K562 (cell line): ENCODE measurements at regions of chr3 and their contacts with region 1.

Region 1: GRCh38 chr3:46368569-46368968 is 2.2 kb upstream of the CCR5 start:
- DNase-seq: peak in 1 of 4 experiments; percentile 33
- ATAC-seq: peak; percentile 86
- H3K4me3 ChIP-seq: no peak overlapping the region
- H3K27ac ChIP-seq: no peak overlapping the region
- H3K4me1 ChIP-seq: no peaks in the 10 kb centered on the region
- H3K27me3 ChIP-seq: peaks cover 30 to 48% of the 10 kb centered on the region in 2 experiments
- CTCF ChIP-seq: peak; percentile 36 to 54 (median 44); a peak in 5 of 6 replicates
- EP300 ChIP-seq: no peak
- POLR2A ChIP-seq: no peak
- RAD21 ChIP-seq: peak; percentile 69 to 76

Region 2: GRCh38 chr3:45972534-45973402 is 395.8 kb before region 1 on chr3:
- CTCF ChIA-PET with region 1: no interaction called
- POLR2A ChIA-PET with region 1: no interaction called
- in situ Hi-C with region 1: no loop called
- intact Hi-C with region 1: no loop called
- DNase-seq: no peak
- ATAC-seq: no peak
- H3K4me3 ChIP-seq: no peak overlapping the region
- H3K27ac ChIP-seq: no peak overlapping the region
- H3K4me1 ChIP-seq: no peaks in the 10 kb centered on the region
- H3K27me3 ChIP-seq: no peaks in the 10 kb centered on the region
- CTCF ChIP-seq: no peak
- EP300 ChIP-seq: no peak
- POLR2A ChIP-seq: no peak
- RAD21 ChIP-seq: no peak

Region 3: DNA sequence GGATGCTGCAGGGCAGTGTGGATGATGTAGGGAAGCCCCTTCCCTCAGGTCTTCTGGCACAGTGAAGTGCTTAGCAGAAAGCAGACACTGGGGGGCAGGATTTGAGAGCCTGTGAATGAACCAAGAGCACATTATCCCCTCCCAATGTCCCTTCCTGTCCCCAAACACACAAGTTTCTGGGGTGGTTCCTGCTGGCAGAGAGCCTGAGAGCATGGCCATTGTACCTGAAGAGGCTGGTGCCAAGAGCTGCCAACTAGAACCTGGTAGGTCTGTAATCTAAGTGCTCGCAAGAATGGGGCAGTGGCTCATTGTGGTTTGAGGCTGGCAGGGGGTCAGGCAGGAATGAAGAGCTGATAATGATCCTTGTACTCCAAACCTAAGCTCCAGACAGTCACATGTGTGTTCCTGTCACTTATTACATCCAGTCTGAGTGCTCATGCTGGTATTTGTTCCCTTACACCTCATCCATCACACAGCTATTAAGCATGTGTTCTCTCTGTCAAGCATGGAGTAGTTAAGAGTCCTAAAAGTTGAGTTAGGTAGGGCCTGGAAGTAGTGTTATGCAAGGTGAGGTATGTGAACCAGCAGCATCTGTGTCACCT is 153.7 kb before region 1 on chr3:
- CTCF ChIA-PET with region 1: no interaction called
- POLR2A ChIA-PET with region 1: interaction called, 3 read pairs
- in situ Hi-C with region 1: no loop called
- intact Hi-C with region 1: loop called (anchors 5 kb)
- DNase-seq: peak in 2 of 4 experiments; percentile 24 to 32
- ATAC-seq: peak; percentile 79
- H3K4me3 ChIP-seq: no peak overlapping the region
- H3K27ac ChIP-seq: no peak overlapping the region
- H3K4me1 ChIP-seq: no peaks in the 10 kb centered on the region
- H3K27me3 ChIP-seq: no peaks in the 10 kb centered on the region
- CTCF ChIP-seq: peak; percentile 49 to 60 (median 58)
- EP300 ChIP-seq: no peak
- POLR2A ChIP-seq: no peak
- RAD21 ChIP-seq: peak; percentile 59 to 68

Region 4: DNA sequence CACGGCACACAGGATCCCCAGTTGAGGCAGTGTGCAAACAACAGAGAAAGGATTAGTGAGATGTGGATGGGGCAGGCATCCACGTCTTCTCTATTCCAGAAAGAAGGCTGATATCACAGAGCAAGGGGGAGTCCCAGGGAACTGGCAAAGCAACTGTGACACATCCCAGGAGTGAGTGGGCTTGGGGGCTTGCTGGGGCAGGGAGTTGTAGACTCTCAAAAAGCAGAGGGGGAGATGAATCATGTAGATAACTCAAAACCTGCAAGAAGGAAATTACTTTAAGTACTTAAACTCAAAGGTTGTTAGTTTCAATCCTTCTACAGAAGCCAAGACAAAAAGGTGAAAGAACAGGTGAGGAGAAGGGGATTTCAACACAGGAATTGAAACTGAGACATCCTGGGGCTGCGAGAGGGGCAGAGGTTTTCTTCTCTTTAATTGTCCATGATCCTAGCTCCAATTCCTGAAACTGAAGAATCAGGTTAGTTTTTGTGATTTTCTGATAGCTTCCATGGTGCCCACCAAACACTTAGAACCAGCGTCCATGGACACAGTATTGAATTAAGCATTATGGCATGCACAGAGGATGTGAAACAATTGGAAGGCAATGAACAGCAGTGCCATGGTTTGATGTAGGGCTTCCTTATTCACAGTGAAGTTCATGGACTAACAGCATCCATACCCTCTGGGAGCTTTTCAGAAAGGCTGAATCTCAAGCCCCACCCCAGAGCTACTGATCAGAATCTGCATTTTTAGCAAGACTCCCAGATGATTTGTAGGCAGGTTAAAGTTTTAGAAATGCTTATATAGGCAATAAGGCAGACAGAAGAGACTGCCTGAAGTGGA is 74.4 kb before region 1 on chr3:
- CTCF ChIA-PET with region 1: no interaction called
- POLR2A ChIA-PET with region 1: no interaction called
- in situ Hi-C with region 1: no loop called
- intact Hi-C with region 1: loop called (anchors 5 kb)
- DNase-seq: no peak
- ATAC-seq: no peak
- H3K4me3 ChIP-seq: no peak overlapping the region
- H3K27ac ChIP-seq: no peak overlapping the region
- H3K4me1 ChIP-seq: no peaks in the 10 kb centered on the region; a peak in 1 of 5 replicates
- H3K27me3 ChIP-seq: peaks cover 8 to 17% of the 10 kb centered on the region in 2 experiments
- CTCF ChIP-seq: no peak
- EP300 ChIP-seq: no peak
- POLR2A ChIP-seq: no peak
- RAD21 ChIP-seq: no peak